ENCODE measurements at regions of chr1 and their contacts with region 1.

Region 1: GRCh38 chr1:156868341-156868740 is 7.7 kb downstream of the NTRK1 start:
- DNase-seq: no peak
- ATAC-seq: no peak
- H3K4me3 ChIP-seq: no peak overlapping the region
- H3K27ac ChIP-seq: no peak overlapping the region
- H3K4me1 ChIP-seq: peaks cover 13% of the 10 kb centered on the region
- CTCF ChIP-seq: no peak
- EP300 ChIP-seq: no peak
- POLR2A ChIP-seq: no peak
- RAD21 ChIP-seq: no peak

Region 2: GRCh38 chr1:156677616-156678596 is 190.4 kb before region 1 on chr1:
- CTCF ChIA-PET with region 1: no interaction called
- POLR2A ChIA-PET with region 1: no interaction called
- DNase-seq: peak; percentile 72 to 85
- ATAC-seq: peak; percentile 72 to 84; a peak in 5 of 6 replicates
- H3K4me3 ChIP-seq: peak overlapping the region; percentile 30; the same call in 2 of the 3 replicates
- H3K27ac ChIP-seq: peak overlapping the region; percentile 68 to 75
- H3K4me1 ChIP-seq: peaks cover 13% of the 10 kb centered on the region
- CTCF ChIP-seq: peak; percentile 96
- EP300 ChIP-seq: no peak
- POLR2A ChIP-seq: no peak
- RAD21 ChIP-seq: peak; percentile 94 to 96

Region 3: DNA sequence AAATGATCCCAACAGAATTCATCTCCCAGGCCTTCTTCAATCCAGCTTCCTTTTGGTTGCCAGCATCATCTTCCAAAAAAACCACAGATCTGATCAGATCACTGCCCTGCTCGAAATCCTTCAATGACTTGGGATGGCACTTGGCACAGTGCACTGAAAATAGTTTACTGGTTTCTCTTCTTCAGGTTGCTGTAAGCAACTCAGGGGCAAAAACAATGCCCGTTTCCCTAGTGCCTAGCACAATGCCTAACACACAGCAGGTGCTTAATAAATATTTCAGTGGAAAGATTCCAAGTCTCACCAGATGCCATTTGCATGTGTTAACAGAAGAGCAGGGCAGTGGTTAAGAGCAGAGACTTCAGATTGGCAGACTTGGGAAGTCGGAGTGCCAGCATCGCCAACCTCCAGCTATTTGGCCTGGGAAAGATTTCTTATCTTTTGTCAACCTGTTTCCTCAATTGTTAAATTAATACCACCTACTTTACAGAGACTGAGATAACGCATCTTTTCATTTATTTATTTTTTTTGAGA is 151.0 kb before region 1 on chr1:
- CTCF ChIA-PET with region 1: no interaction called
- POLR2A ChIA-PET with region 1: no interaction called
- DNase-seq: no peak
- ATAC-seq: no peak
- H3K4me3 ChIP-seq: no peak overlapping the region
- H3K27ac ChIP-seq: no peak overlapping the region
- H3K4me1 ChIP-seq: peaks cover 16% of the 10 kb centered on the region; the same call in 2 of the 3 replicates
- CTCF ChIP-seq: no peak
- EP300 ChIP-seq: no peak
- POLR2A ChIP-seq: no peak
- RAD21 ChIP-seq: no peak

Region 4: DNA sequence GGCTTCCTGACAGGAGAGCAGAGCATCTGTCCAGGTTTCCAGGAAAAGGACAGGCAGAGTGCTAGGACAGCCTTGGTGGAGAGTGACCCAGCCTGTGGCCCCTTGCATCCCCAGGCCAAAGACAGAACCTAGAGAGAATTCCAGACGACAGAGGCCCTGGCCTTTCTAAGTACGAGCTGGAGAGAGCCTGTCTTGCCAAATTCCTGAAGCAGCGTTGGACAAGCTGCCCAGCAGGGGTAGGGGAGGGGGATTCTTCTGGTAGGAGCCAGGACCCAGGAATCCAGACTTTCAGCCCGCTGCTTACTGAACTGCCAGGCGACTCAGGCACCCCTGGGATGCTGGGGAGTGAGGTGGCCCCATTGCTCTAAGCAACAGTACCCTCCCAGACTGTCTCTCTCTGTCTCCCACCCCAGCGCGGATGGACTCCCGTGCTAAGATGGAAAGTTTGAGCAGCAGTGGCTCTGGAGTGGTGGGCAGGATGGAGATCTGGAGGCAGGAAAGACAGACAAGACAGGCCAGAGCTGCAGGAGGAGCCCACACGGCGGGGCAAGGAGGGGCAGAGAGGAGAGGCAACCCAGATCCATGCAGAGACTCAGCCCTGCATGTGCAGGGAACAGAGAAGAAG is 16.3 kb after region 1 on chr1:
- CTCF ChIA-PET with region 1: interaction called, 178 read pairs
- POLR2A ChIA-PET with region 1: no interaction called
- DNase-seq: no peak
- ATAC-seq: peak in 1 of 2 experiments; percentile 12; a peak in 3 of 6 replicates
- H3K4me3 ChIP-seq: no peak overlapping the region
- H3K27ac ChIP-seq: no peak overlapping the region
- H3K4me1 ChIP-seq: no peaks in the 10 kb centered on the region
- CTCF ChIP-seq: no peak
- EP300 ChIP-seq: no peak
- POLR2A ChIP-seq: no peak
- RAD21 ChIP-seq: no peak

Region 5: GRCh38 chr1:157217486-157217885 is 349.1 kb after region 1 on chr1:
- CTCF ChIA-PET with region 1: no interaction called
- POLR2A ChIA-PET with region 1: no interaction called
- DNase-seq: no peak
- ATAC-seq: no peak
- H3K4me3 ChIP-seq: no peak overlapping the region
- H3K27ac ChIP-seq: no peak overlapping the region
- H3K4me1 ChIP-seq: no peaks in the 10 kb centered on the region
- CTCF ChIP-seq: no peak
- EP300 ChIP-seq: no peak
- POLR2A ChIP-seq: no peak
- RAD21 ChIP-seq: no peak